ENCODE measurements at regions of chr5 and their contacts with region 1.

Region 1: DNA sequence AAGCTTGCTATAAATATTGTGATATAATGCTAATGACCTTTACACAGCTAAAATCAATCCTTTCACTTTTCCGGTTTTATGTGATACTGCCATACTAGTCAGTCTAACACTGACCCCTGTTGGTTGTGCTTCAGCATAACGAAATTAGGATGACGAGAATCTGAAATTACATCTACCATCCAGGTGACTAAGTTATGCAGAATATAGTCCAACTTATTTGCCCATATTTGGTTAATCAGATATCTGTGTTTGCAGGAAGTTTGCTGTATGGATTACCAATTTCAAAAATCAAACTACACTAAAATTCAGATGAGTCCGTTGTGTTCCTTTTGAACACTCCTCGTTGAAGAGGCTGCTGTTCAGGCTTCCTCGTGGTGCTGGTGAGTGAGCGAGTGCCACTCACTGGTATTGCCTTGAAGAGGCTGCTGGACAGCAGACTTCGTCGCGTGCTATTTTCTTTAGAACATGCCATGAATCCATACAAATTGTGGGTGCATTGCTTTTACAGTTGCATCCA is 32.5 kb downstream of the TENT4A start:
- DNase-seq: no peak
- ATAC-seq: peak; percentile 66 to 90 (median 89)
- H3K4me3 ChIP-seq: no peak overlapping the region
- H3K27ac ChIP-seq: no peak overlapping the region
- H3K4me1 ChIP-seq: no peaks in the 10 kb centered on the region
- H3K27me3 ChIP-seq: no peaks in the 10 kb centered on the region
- CTCF ChIP-seq: peak; percentile 37 to 64 (median 59)

Region 2: GRCh38 chr5:6291961-6292360 is 453.8 kb before region 1 on chr5:
- intact Hi-C with region 1: loop called in 1 of 3 experiments (anchors 10 kb)
- DNase-seq: no peak
- ATAC-seq: no peak
- H3K4me3 ChIP-seq: no peak overlapping the region
- H3K27ac ChIP-seq: no peak overlapping the region
- H3K4me1 ChIP-seq: no peaks in the 10 kb centered on the region
- H3K27me3 ChIP-seq: no peaks in the 10 kb centered on the region
- CTCF ChIP-seq: no peak